ENCODE measurements at regions of chr22 and their contacts with region 1.

Region 1: DNA sequence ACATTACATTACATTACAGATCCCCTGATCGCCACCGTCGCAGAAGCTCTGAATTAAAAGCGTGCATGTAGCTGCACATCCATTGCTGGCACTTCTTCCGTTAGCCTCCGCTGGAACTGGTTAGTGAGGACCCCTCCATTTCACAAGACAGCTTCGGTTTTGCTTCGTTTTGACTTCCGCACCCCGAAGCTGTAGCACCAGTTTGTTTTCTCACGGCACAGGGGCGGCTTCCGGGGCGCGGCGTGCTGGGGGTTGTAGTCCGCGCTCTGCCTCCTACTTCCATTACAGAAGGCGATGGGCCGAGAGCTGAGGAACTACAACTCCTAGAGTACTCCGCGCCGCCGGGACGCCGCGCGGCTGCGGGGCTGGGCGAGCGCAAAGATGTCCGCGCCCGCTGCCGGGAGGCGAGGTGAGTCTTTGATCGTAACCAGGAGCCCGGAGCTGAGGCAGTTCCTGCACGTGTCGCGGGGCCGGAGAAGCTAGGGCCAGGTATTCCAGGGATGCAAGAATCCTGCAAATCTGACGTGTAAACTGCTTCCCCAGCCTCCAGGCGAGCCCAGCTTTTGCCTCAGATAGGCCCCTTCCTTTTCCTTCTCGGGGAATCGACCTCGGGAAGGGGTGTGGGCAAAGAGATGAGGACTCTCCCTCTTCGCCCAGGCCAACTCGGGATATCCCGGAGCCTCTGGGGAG is at the start of gene PEX26:
- DNase-seq: peak; percentile 91 to 97 (median 93)
- ATAC-seq: peak; percentile 98
- H3K4me3 ChIP-seq: peak within 1 kb of the TSS; percentile 97
- H3K4me3 Mint-ChIP-seq: peak within 1 kb of the TSS; percentile 94
- H3K27ac ChIP-seq: peak within 1 kb of the TSS; percentile 62 to 86
- H3K27ac Mint-ChIP-seq: peak within 1 kb of the TSS; percentile 94
- H3K4me1 ChIP-seq: peaks cover 29% of the 10 kb centered on the region
- H3K4me1 Mint-ChIP-seq: peaks cover 62% of the 10 kb centered on the region
- H3K27me3 ChIP-seq: no peaks in the 10 kb centered on the region
- H3K27me3 Mint-ChIP-seq: no peaks in the 10 kb centered on the region
- CTCF ChIP-seq: no peak
- total RNA-seq, gene PEX26: 19.6 to 20.8 TPM

Region 2: DNA sequence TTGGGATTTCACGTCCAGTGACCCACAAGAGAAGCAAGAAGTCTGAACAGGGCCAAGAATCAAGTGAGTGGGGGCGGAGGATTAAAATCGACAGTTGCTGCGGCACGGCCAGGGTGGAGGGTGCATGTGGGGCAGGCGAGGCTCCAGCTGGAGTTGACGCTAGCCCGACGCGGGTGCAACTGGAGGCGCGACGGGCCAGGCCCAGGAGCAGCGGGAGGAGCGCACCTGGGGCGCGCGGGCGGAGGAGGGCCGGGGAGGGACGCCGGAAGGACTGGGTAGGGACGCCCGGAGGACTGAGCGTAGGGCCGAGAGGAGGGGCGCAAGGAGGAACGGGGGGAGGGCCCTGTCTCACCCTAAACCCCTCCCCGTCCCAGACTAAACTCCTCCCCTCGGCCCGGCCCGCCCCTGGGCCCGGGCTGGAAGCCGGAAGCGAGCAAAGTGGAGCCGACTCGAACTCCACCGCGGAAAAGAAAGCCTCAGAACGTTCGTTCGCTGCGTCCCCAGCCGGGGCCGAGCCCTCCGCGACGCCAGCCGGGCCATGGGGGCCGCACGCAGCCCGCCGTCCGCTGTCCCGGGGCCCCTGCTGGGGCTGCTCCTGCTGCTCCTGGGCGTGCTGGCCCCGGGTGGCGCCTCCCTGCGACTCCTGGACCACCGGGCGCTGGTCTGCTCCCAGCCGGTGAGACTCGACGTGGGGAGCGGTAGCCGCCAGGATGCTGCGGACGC is 993.1 kb before region 1 on chr22 and contains the start of gene IL17RA:
- CTCF ChIA-PET with region 1: no interaction called
- POLR2A ChIA-PET with region 1: interaction called, 3 read pairs
- intact Hi-C with region 1: loop called (anchors 5 kb)
- DNase-seq: peak; percentile 87 to 98 (median 95)
- ATAC-seq: peak; percentile 86
- H3K4me3 ChIP-seq: peak within 1 kb of the TSS; percentile 82
- H3K4me3 Mint-ChIP-seq: peak within 1 kb of the TSS; percentile 97
- H3K27ac ChIP-seq: peak within 1 kb of the TSS; percentile 68 to 93
- H3K27ac Mint-ChIP-seq: peak within 1 kb of the TSS; percentile 88
- H3K4me1 ChIP-seq: peaks cover 49% of the 10 kb centered on the region
- H3K4me1 Mint-ChIP-seq: peaks cover 48% of the 10 kb centered on the region
- H3K27me3 ChIP-seq: no peaks in the 10 kb centered on the region
- H3K27me3 Mint-ChIP-seq: no peaks in the 10 kb centered on the region
- CTCF ChIP-seq: no peak
- total RNA-seq, gene IL17RA: 23.2 to 24.3 TPM

Region 3: DNA sequence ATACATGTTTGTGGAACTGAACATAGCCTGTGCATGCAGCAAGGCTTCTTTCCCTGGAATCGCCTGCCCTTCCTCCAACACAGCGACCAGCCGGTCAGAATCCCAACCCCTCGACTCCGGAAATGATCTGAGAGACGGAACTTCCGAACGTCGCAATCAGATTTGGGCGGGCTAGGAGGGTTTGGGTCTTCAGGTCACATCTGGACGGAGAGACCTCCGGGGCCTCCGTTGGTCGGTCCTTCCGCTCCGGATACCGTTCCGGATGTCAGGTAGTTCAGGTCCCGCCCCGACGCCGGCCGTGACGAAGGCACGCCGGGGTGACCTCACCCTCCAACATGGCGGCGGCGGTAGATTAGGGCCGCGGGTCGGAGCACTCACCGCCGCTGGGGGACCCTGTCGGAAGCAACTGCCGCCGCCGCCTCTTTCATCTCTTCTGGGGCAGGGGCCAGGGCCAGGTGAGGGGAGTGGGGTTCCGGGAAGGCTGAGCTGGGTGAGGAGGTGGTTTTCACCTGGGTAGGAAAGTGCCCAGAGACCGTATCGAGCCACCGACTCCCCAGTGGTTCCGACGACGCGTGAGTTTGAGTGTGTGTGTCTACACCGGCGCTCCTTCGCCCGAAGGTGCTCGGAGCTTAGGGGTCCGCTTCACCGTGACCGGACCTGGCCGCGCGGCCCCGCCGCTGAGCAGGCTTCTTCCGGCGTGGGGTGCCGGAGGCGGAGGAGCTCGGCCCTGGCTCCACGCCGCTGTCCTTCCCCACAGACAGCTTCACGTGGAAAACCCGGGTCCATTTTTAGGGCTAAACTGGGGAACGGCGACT is 439.1 kb before region 1 on chr22 and contains the start of gene BCL2L13:
- CTCF ChIA-PET with region 1: no interaction called
- POLR2A ChIA-PET with region 1: interaction called, 13 read pairs
- intact Hi-C with region 1: loop called in 1 of 2 experiments (anchors 5 kb)
- DNase-seq: peak; percentile 77 to 94 (median 84)
- ATAC-seq: peak; percentile 90
- H3K4me3 ChIP-seq: peak within 1 kb of the TSS; percentile 85
- H3K4me3 Mint-ChIP-seq: peak within 1 kb of the TSS; percentile 92
- H3K27ac ChIP-seq: peak within 1 kb of the TSS; percentile 98 to 99
- H3K27ac Mint-ChIP-seq: peak within 1 kb of the TSS; percentile 96
- H3K4me1 ChIP-seq: peaks cover 24% of the 10 kb centered on the region
- H3K4me1 Mint-ChIP-seq: peaks cover 31% of the 10 kb centered on the region
- H3K27me3 ChIP-seq: no peaks in the 10 kb centered on the region
- H3K27me3 Mint-ChIP-seq: no peaks in the 10 kb centered on the region
- CTCF ChIP-seq: no peak
- total RNA-seq, gene BCL2L13: 8.1 to 10.0 TPM

Region 4: DNA sequence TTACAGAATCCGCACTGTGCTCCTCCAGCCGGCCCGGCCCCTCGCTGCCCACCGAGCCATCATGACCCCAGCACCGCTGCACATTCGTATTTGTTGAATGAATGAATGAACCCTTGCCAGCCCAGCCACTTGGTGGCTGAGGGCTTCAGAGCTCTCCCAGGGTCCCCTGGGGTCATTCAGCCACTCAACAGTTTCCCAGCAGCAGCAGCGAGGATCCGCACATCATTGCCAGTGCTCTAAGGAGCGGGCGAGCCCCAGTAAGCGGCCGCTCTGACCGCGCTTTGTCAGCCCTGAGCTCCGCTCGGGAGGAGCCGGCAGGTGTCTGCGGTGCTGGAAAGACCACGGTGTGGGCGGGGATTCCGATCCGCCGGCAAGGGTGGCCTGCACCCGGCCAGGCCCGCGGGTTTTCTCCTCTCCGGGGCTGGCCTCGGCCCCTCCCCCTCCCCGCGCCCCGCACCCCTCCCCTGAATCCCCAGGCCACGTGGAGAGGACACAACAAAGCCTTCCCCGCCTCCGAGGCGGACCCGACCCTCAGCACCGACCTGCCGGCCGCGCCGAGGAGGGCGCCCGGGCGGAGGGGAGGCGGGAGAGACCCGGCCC is 304.1 kb before region 1 on chr22:
- CTCF ChIA-PET with region 1: interaction called, 3 read pairs
- POLR2A ChIA-PET with region 1: interaction called, 10 read pairs
- intact Hi-C with region 1: no loop called
- DNase-seq: peak; percentile 34 to 85 (median 46)
- ATAC-seq: peak; percentile 47
- H3K4me3 ChIP-seq: peak overlapping the region; percentile 76
- H3K4me3 Mint-ChIP-seq: peak overlapping the region; percentile 90
- H3K27ac ChIP-seq: no peak overlapping the region
- H3K27ac Mint-ChIP-seq: peak overlapping the region; percentile 90
- H3K4me1 ChIP-seq: peaks cover 85% of the 10 kb centered on the region
- H3K4me1 Mint-ChIP-seq: peaks cover 74% of the 10 kb centered on the region
- H3K27me3 ChIP-seq: no peaks in the 10 kb centered on the region
- H3K27me3 Mint-ChIP-seq: no peaks in the 10 kb centered on the region
- CTCF ChIP-seq: no peak

Region 5: GRCh38 chr22:18001040-18001893 is 76.5 kb before region 1 on chr22:
- CTCF ChIA-PET with region 1: interaction called, 6 read pairs
- POLR2A ChIA-PET with region 1: interaction called, 9 read pairs
- intact Hi-C with region 1: loop called (anchors 2 to 5 kb)
- DNase-seq: peak; percentile 12 to 79 (median 43)
- ATAC-seq: peak; percentile 27
- H3K4me3 ChIP-seq: peak overlapping the region; percentile 64
- H3K4me3 Mint-ChIP-seq: peak overlapping the region; percentile 91
- H3K27ac ChIP-seq: peak overlapping the region; percentile 46 to 57
- H3K27ac Mint-ChIP-seq: peak overlapping the region; percentile 66
- H3K4me1 ChIP-seq: peaks cover 45% of the 10 kb centered on the region
- H3K4me1 Mint-ChIP-seq: peaks cover 46% of the 10 kb centered on the region
- H3K27me3 ChIP-seq: no peaks in the 10 kb centered on the region
- H3K27me3 Mint-ChIP-seq: peaks cover 23% of the 10 kb centered on the region
- CTCF ChIP-seq: peak; percentile 33

Region 6: GRCh38 chr22:18152519-18152918 is 74.7 kb after region 1 on chr22:
- CTCF ChIA-PET with region 1: interaction called, 5 read pairs
- POLR2A ChIA-PET with region 1: interaction called, 29 read pairs
- intact Hi-C with region 1: loop called (anchors 1 to 2 kb)
- DNase-seq: peak in 9 of 14 experiments; percentile 11 to 51 (median 42)
- ATAC-seq: peak; percentile 43
- H3K4me3 ChIP-seq: peak overlapping the region; percentile 5
- H3K4me3 Mint-ChIP-seq: peak overlapping the region; percentile 77
- H3K27ac ChIP-seq: no peak overlapping the region
- H3K27ac Mint-ChIP-seq: peak overlapping the region; percentile 93
- H3K4me1 ChIP-seq: peaks cover 25% of the 10 kb centered on the region
- H3K4me1 Mint-ChIP-seq: peaks cover 58% of the 10 kb centered on the region
- H3K27me3 ChIP-seq: no peaks in the 10 kb centered on the region
- H3K27me3 Mint-ChIP-seq: no peaks in the 10 kb centered on the region
- CTCF ChIP-seq: no peak